Endothelial cell of umbilical vein (primary cell): ENCODE measurements at regions of chr15 and their contacts with region 1.

Region 1: DNA sequence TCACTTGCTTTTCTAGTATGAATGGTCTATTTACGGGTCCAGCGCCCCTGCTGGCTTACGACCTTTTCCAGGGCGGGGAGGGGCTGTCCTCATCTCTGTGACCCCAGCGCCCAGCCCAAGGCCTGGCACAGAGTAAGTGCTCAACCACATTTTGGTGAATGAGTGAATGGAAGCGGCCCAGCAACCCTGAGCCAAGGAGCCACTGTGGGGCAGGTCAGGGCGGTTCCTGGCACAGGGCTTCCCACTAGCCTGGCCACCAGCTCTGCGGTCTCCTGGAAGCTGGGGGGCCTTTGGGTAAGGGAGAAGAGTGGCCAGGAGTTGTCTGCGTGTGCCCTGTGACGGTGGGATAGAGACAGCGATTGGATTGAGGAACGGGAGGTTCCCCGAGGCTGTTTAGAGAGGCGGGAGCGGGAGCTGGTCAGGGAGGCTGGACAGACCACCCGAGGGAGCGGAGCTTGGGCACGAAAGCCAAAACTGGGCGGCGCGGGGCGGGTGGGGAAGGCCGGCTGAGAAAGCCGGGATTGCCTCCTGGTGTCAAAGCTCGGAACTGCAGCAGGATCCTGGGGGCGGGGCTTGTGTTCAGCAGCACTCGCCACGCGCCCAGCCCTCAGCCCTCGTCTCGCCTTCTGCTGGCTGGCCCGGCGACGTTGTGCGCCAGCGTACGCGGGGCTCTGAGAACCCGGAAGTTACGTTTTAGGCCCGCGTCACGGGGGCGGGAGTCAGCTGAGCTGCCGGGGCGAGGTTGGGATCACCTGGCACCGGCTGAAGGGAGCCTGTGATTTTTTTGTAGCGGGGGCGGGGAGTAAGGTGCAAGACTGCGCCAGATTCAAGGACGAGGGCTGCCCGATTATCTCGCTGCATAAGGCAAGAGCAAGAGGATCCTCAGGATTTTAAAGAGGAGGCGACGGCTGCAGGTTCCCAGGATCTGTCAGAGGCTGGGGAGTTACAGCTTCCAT is at the start of gene VPS18:
- DNase-seq: peak; percentile 96
- H3K4me3 ChIP-seq: peak within 1 kb of the TSS; percentile 86 to 91 (median 88)
- H3K27ac ChIP-seq: peak within 1 kb of the TSS; percentile 86
- H3K4me1 ChIP-seq: peaks cover 14% of the 10 kb centered on the region
- H3K27me3 ChIP-seq: no peaks in the 10 kb centered on the region
- CTCF ChIP-seq: peak; percentile 77 to 95
- POLR2A ChIP-seq: peak; percentile 60
- total RNA-seq, gene VPS18: 32.8 and 33.3 TPM in 2 replicates

Region 2: GRCh38 chr15:40516322-40516721 is 377.7 kb before region 1 on chr15:
- CTCF ChIA-PET with region 1: interaction called, 12 read pairs
- POLR2A ChIA-PET with region 1: no interaction called
- dilution Hi-C with region 1: no loop called
- intact Hi-C with region 1: loop called (anchors 1 kb)
- DNase-seq: no peak
- H3K4me3 ChIP-seq: no peak overlapping the region
- H3K27ac ChIP-seq: no peak overlapping the region
- H3K4me1 ChIP-seq: no peaks in the 10 kb centered on the region
- H3K27me3 ChIP-seq: no peaks in the 10 kb centered on the region
- CTCF ChIP-seq: no peak
- POLR2A ChIP-seq: no peak

Region 3: DNA sequence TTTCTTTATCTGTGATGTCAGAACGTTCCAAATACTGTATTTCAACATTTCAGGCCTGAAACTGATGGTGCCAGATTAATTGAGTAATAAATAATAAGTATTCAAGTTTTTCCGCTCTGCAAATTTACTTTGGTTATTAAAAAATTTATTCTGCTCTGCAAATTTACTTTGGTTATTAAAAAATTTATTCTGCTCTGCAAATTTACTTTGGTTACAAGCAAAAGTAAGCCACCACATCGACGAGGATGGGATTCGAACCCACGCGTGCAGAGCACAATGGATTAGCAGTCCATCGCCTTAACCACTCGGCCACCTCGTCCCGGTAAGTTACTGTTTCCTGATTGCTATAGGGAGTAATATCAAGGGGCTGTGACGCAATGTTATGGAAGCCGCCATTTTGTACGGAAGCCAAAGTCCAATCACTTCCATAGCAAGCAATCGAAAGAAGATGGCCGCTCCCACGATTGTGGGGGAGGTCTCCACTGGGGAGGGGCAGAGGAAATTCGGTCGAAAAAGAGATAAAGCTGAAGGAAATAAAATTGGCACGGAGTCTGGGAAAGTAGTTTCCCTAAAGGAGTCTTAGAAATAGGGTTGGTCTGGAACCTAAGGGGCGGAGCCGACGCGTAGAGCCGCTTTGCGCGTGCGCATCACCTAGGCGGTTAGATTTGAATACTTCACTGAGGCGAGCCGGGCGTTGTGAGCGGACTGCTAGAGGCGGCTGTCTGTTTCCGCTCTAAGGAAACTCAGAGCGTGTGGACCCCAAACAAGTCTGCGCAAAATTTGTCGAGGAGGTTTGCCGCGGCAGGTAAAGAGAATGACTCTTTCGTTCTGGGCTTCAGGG is 300.2 kb before region 1 on chr15 and contains the start of gene KNL1:
- CTCF ChIA-PET with region 1: interaction called, 25 read pairs
- POLR2A ChIA-PET with region 1: no interaction called
- dilution Hi-C with region 1: no loop called
- intact Hi-C with region 1: loop called (anchors 1 kb)
- DNase-seq: peak; percentile 100
- H3K4me3 ChIP-seq: peak within 1 kb of the TSS; percentile 52 to 99 (median 99)
- H3K27ac ChIP-seq: peak within 1 kb of the TSS; percentile 99
- H3K4me1 ChIP-seq: peaks cover 8% of the 10 kb centered on the region
- H3K27me3 ChIP-seq: peaks cover under 1 to 3% of the 10 kb centered on the region in 2 experiments
- CTCF ChIP-seq: no peak
- POLR2A ChIP-seq: peak; percentile 83
- total RNA-seq, gene KNL1: 31.8 and 33.8 TPM in 2 replicates

Region 4: GRCh38 chr15:40702077-40702476 is 191.9 kb before region 1 on chr15:
- CTCF ChIA-PET with region 1: interaction called, 12 read pairs
- POLR2A ChIA-PET with region 1: no interaction called
- dilution Hi-C with region 1: no loop called
- intact Hi-C with region 1: loop called (anchors 5 kb)
- DNase-seq: peak; percentile 43
- H3K4me3 ChIP-seq: no peak overlapping the region
- H3K27ac ChIP-seq: no peak overlapping the region
- H3K4me1 ChIP-seq: no peaks in the 10 kb centered on the region
- H3K27me3 ChIP-seq: no peaks in the 10 kb centered on the region
- CTCF ChIP-seq: peak; percentile 6 to 29
- POLR2A ChIP-seq: no peak

Region 5: DNA sequence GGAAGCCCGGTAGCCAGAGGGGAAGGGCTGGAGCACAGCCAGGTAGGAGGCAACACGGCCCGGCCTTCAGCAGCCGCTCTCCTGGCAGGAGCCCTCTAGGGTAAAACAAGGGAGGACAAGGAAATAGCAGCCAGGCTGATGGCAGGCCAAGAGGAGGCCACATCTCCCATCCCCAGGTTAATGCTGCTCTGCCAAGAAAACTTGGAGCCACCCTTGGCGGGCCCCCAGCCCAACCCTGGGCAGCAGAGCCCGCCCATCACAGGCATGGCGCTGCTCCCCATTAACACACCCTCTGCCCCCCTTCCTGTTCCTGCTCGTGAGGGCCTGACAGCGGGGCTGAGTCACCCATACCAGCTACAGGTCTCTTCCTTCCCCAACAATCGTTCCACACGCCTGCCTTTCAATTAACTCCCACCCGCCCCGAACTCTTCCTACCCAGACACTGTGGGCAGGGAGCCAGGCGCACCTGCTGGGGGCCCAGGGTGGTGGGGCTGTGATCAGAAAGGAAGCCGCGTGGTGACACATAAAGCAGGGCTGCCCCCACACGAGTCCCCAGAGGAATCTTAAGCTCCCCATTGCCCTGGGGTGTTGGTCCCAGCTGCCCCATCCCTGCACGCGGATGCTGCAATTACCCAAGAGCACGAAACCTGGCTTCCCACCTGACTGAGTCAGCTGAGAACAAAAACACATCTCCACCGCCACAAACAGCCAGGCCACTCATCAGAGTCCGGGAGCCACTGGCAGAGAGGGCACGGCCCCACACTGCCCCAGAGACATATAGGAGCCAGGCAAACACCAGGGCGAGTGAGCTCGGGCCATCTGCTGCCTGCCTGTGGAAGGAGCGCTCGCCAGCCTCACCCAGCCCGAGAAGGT is 124.5 kb before region 1 on chr15 and contains the start of gene C15orf62:
- CTCF ChIA-PET with region 1: interaction called, 12 read pairs
- POLR2A ChIA-PET with region 1: no interaction called
- dilution Hi-C with region 1: no loop called
- intact Hi-C with region 1: no loop called
- DNase-seq: peak; percentile 65
- H3K4me3 ChIP-seq: no peak within 1 kb of the TSS
- H3K27ac ChIP-seq: peak within 1 kb of the TSS; percentile 46
- H3K4me1 ChIP-seq: peaks cover 29% of the 10 kb centered on the region
- H3K27me3 ChIP-seq: no peaks in the 10 kb centered on the region
- CTCF ChIP-seq: no peak
- POLR2A ChIP-seq: no peak
- total RNA-seq, gene C15orf62: 0.38 and 0.44 TPM in 2 replicates

Region 6: GRCh38 chr15:40873625-40874561 is 20.1 kb before region 1 on chr15 and contains the start of gene RHOV:
- CTCF ChIA-PET with region 1: interaction called, 48 read pairs
- POLR2A ChIA-PET with region 1: no interaction called
- dilution Hi-C with region 1: no loop called
- intact Hi-C with region 1: no loop called
- DNase-seq: peak; percentile 43
- H3K4me3 ChIP-seq: peak within 1 kb of the TSS; percentile 9 to 43 (median 25)
- H3K27ac ChIP-seq: no peak within 1 kb of the TSS
- H3K4me1 ChIP-seq: no peaks in the 10 kb centered on the region
- H3K27me3 ChIP-seq: no peaks in the 10 kb centered on the region
- CTCF ChIP-seq: peak; percentile 33 to 55
- POLR2A ChIP-seq: no peak
- total RNA-seq, gene RHOV: 0.18 and 0.20 TPM in 2 replicates

Region 7: GRCh38 chr15:40928821-40929659 is 35.0 kb after region 1 on chr15 and contains the start of gene DLL4:
- CTCF ChIA-PET with region 1: interaction called, 10 read pairs
- POLR2A ChIA-PET with region 1: interaction called, 3 read pairs
- dilution Hi-C with region 1: no loop called
- intact Hi-C with region 1: no loop called
- DNase-seq: peak; percentile 94
- H3K4me3 ChIP-seq: peak within 1 kb of the TSS; percentile 0 to 89 (median 56)
- H3K27ac ChIP-seq: no peak within 1 kb of the TSS
- H3K4me1 ChIP-seq: peaks cover 25% of the 10 kb centered on the region
- H3K27me3 ChIP-seq: peaks cover 14 to 21% of the 10 kb centered on the region in 2 experiments
- CTCF ChIP-seq: peak in 1 of 2 donors; percentile 7
- POLR2A ChIP-seq: peak; percentile 99
- total RNA-seq, gene DLL4: 55.2 and 75.8 TPM in 2 replicates